ENCODE measurements at regions of chr3 and their contacts with region 1.

Region 1: DNA sequence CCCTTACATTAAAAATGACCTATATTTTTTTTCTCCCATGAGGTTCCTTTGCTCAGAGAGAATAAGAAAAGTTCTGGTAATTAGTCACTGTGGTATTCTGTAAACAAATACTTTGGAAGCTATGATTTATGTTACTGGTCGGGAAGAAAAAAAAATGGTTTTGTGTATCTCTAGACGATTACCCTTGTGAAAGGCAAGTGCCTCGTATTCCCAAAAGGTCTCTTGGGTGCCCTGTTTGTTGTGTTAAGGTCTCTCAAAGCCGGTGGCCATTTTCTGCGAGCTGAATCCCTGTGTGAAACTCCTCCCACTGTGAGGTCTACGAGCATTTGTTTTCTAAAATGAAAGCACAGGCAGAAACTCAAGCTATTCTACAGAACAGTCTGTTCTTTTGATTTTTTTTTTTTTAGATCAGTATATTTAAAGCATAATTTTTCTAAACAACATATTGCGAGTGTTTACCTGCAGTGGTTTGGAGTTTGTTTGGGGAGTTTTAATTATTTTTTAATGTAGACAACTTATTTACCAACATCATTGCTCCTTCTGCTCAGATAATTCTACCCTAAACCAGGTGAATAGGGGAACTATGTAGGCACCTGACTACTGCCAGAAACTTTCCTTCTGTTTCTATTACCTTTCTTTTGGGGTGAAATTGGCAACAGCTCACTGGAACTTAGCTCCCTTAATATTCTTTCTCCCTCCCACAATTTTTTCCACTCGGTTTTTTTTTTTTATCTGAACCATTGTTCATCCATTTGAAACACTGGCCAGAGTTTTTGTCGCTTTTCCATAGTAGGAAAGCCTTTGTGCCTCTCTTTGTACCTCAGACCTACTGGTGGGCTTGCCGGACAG is 44.0 kb downstream of the ZBTB38 start:
- DNase-seq: peak; percentile 79
- H3K4me3 ChIP-seq: peak overlapping the region; percentile 20 to 42 (median 38)
- H3K27ac ChIP-seq: peak overlapping the region; percentile 97 to 98 (median 98)
- H3K4me1 ChIP-seq: peaks cover 0 to 94% (median 91%) of the 10 kb centered on the region in 4 donors
- H3K27me3 ChIP-seq: no peaks in the 10 kb centered on the region
- CTCF ChIP-seq: no peak
- EP300 ChIP-seq: peak in 3 of 4 donors; percentile 4 to 51 (median 22)
- POLR2A ChIP-seq: peak in 1 of 2 donors; percentile 9

Region 2: DNA sequence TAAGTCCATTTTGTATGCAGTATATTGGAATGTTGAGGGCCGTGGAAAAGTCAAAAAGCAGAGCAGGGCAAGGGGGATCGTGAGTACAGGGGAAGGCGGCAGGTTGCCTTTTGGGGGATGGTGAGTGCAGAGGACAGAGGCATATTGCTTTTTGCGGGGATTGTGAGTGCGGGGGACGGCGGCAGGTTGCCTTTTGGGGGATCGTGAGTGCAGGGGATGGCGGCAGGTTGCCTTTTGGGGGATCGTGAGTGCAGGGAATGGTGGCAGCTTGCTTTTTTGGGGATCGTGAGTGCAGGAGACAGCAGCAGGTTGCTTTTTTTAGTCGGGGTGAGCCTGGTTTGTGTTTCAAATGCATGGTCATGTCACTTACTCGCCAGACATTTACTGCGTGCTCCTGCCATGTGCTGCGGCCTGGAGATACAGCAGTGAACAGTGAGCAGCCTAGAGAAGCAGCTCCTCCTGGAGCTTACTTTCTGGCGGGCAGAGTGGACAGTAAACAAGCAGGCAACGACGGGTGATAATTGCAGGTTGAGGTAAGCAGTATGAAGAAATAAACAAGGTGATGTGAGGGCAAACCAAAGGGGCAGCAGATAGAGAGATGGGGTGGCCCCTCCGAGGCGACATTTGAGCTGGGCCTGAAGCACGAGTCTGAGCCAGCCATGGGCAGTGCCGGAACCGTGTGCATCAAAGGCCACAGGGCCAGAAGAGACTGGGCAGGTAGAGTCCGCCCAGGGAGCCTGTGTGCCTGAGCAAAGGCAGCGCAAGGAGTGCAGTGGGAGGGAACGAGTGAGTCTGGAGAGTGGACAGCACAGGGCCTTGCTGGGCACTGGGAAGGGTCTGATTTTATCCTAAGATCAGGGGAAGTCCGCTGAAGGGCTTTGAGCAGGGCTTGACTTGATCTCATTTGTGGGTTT is 17.1 kb after region 1 on chr3:
- intact Hi-C with region 1: loop called (anchors 2 kb)
- DNase-seq: peak; percentile 88
- H3K4me3 ChIP-seq: peak overlapping the region; percentile 0 to 41 (median 30)
- H3K27ac ChIP-seq: peak overlapping the region; percentile 82 to 96 (median 88)
- H3K4me1 ChIP-seq: peaks cover 0 to 100% (median 92%) of the 10 kb centered on the region in 4 donors
- H3K27me3 ChIP-seq: no peaks in the 10 kb centered on the region
- CTCF ChIP-seq: no peak
- EP300 ChIP-seq: peak in 3 of 4 donors; percentile 73 to 92 (median 84)
- POLR2A ChIP-seq: peak in 1 of 2 donors; percentile 18

Region 3: GRCh38 chr3:141561426-141562034 is 149.2 kb after region 1 on chr3:
- intact Hi-C with region 1: no loop called
- DNase-seq: no peak
- H3K4me3 ChIP-seq: no peak overlapping the region
- H3K27ac ChIP-seq: no peak overlapping the region
- H3K4me1 ChIP-seq: peaks cover 0 to 11% (median 3%) of the 10 kb centered on the region in 4 donors
- H3K27me3 ChIP-seq: no peaks in the 10 kb centered on the region
- CTCF ChIP-seq: peak; percentile 92 to 99 (median 96)
- EP300 ChIP-seq: no peak
- POLR2A ChIP-seq: no peak